Testis (tissue), 5 donors: ENCODE measurements at regions of chr22 and their contacts with region 1.

Region 1: DNA sequence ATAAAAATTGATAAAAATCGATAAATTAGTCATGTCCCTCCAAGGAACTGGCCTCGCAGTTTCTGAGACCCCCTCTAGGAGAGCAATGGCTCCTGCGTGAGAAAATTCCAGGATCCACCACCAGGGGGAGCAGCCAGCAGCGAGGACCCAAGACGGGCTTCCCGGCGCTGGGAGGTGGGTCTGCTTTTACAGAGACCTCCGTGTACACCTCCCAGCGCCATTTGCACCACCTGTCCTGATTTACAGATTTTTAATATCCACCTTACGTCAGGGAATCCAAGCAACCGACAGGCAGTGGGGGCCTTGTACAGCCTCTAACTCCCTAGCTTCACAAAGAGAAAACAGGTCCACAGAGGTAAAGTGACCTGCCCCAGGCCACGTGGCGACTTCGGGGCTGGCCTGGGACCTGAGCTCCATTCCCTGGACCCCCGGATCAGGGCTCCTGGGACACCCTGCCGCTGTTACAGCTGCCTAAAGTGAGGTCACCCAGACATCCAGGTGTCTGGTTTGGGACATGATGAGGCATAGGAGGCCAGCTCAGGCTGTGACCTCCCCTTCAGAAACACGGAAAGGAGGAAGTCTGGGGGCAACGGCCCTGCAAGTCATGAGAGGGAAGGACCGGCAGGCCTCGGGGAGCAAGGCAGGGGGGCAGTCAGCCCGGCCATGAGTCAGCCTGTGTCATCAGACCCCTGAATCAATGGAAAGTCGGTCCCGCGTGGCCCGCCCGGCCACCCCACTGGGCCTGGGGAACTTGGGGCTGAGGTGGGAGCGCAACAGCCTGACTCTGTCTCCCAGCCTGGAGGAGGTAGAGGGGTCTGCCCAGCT is 3.5 kb downstream of the OSM start:
- DNase-seq: peak; percentile 89
- H3K4me3 ChIP-seq: no peak overlapping the region
- H3K27ac ChIP-seq: no peak overlapping the region
- H3K4me1 ChIP-seq: peaks cover 4% of the 10 kb centered on the region
- H3K27me3 ChIP-seq: no peaks in the 10 kb centered on the region
- CTCF ChIP-seq: peak; percentile 98 to 100 (median 98)
- POLR2A ChIP-seq: no peak

Region 2: GRCh38 chr22:29701155-29701999 is 561.8 kb before region 1 on chr22:
- intact Hi-C with region 1: loop called (anchors 10 kb)
- DNase-seq: no peak
- H3K4me3 ChIP-seq: no peak overlapping the region
- H3K27ac ChIP-seq: no peak overlapping the region
- H3K4me1 ChIP-seq: peaks cover 6% of the 10 kb centered on the region
- H3K27me3 ChIP-seq: no peaks in the 10 kb centered on the region
- CTCF ChIP-seq: no peak
- POLR2A ChIP-seq: no peak